ENCODE measurements at regions of chr5 and their contacts with region 1.

Region 1: GRCh38 chr5:72518001-72518683 is 10.9 kb upstream of the ZNF366 start:
- DNase-seq: peak; percentile 84 to 88
- ATAC-seq: peak; percentile 62
- H3K4me3 ChIP-seq: no peak overlapping the region
- H3K27ac ChIP-seq: peak overlapping the region; percentile 47 to 83
- H3K4me1 ChIP-seq: peaks cover 3 to 7% of the 10 kb centered on the region in 2 donors
- H3K27me3 ChIP-seq: no peaks in the 10 kb centered on the region

Region 2: GRCh38 chr5:72378636-72379290 is 139.4 kb before region 1 on chr5:
- intact Hi-C with region 1: loop called in 1 of 2 experiments (anchors 5 kb)
- DNase-seq: peak in 1 of 2 donors; percentile 68
- ATAC-seq: peak; percentile 55
- H3K4me3 ChIP-seq: no peak overlapping the region
- H3K27ac ChIP-seq: no peak overlapping the region
- H3K4me1 ChIP-seq: peaks cover 3 to 4% of the 10 kb centered on the region in 2 donors
- H3K27me3 ChIP-seq: no peaks in the 10 kb centered on the region

Measured in aorta (tissue), 5 donors.